Activated CD8-positive, alpha-beta memory T cell treated with anti-CD3 and anti-CD28 coated beads, Interleukin-2, amount 10 ng/mL, durations not matched to agents 7 days and 5 days (primary cell): ENCODE measurements at regions of chr4 and their contacts with region 1.

Region 1: DNA sequence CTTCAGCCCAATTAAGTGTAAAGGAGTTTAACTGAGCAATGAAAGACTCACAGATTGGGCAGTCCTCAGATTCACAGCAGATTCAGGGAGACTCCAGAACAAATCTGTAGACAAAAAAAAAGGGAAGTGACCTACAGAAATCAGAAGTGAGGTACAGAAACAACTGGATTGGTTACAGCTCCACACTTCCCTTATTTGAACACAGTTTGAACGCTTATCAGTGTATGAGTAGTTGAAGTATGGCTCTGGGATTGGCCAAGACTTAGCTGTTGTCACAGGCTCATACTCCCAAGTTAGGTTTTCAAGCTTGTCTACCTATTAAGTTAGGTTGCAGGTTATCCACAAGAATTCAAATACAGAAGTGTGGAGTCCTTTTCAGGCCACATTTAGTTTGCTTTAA is 112.4 kb upstream of the ELOVL6 start:
- DNase-seq: no peak
- ATAC-seq: no peak
- H3K4me3 Mint-ChIP-seq: no peak overlapping the region
- H3K27ac Mint-ChIP-seq: no peak overlapping the region
- H3K4me1 Mint-ChIP-seq: no peaks in the 10 kb centered on the region
- H3K27me3 Mint-ChIP-seq: peaks cover 25% of the 10 kb centered on the region

Region 2: DNA sequence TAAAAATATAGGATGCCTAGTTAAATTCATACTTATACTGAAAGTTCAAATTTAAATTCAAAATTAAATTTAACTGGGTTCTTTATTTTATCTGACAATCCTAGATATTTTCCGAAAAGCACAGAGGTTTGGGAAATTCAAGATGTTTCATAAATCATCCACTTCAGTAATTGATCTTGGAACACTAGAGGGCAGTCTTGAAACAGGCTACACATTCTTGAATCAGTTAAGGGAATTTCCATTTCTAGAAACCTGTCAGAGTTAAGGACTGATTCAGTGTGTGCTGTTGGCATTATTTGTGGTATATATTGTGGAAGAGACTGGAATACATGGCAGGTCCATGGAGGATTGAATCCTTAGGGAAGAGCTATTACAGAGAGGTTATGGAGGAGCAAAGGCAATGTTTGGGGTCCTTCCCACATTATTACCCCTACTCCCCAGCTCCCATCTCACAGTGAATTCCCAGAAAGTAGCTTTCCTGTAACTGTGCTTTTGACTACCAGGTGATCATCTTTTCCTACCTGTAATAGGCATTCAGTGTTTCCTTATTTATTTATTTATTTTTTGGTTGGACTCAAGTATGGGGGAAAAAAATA is 305.2 kb before region 1 on chr4:
- CTCF ChIA-PET with region 1: interaction called, 10 read pairs
- DNase-seq: no peak
- ATAC-seq: peak; percentile 53
- H3K4me3 Mint-ChIP-seq: no peak overlapping the region
- H3K27ac Mint-ChIP-seq: no peak overlapping the region
- H3K4me1 Mint-ChIP-seq: peaks cover 12% of the 10 kb centered on the region
- H3K27me3 Mint-ChIP-seq: peaks cover 2% of the 10 kb centered on the region

Region 3: DNA sequence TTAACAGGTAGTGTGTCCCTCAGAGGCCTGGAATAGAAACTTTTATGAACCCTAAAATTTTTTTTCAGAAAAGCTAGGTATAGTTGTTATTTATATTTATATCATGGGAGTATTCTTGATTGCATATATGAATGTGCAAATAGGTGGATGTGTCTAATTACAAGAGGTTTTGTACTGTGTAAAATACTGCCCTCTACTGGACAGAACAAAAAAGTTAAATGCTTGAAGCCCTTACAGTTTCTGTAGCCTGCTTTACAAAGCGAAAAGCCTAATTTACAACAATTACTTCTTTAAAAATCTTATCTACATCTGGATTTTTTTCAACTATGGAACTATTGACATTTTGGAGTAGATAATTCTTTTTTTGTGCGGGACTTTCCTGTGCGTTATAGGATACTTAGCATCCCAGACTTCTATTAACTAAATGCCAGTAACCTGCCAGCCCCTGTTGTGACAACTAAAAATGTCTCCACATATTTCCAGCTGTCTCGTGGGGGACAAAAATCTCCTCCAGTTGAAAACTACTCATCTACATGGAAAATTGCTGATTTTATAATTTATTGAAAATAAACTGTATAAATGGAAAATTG is 200.3 kb after region 1 on chr4:
- CTCF ChIA-PET with region 1: interaction called, 26 read pairs
- DNase-seq: no peak
- ATAC-seq: peak; percentile 74
- H3K4me3 Mint-ChIP-seq: no peak overlapping the region
- H3K27ac Mint-ChIP-seq: no peak overlapping the region
- H3K4me1 Mint-ChIP-seq: peaks cover 9% of the 10 kb centered on the region
- H3K27me3 Mint-ChIP-seq: peaks cover under 1% of the 10 kb centered on the region